A673 (cell line): ENCODE measurements at regions of chr11 and their contacts with region 1.

Region 1: GRCh38 chr11:68127714-68128681 is 6.8 kb upstream of the CHKA start:
- DNase-seq: peak; percentile 38
- H3K4me3 ChIP-seq: peak overlapping the region; percentile 30
- H3K27ac ChIP-seq: no peak overlapping the region
- H3K4me1 ChIP-seq: no peaks in the 10 kb centered on the region
- H3K27me3 ChIP-seq: no peaks in the 10 kb centered on the region
- CTCF ChIP-seq: no peak

Region 2: DNA sequence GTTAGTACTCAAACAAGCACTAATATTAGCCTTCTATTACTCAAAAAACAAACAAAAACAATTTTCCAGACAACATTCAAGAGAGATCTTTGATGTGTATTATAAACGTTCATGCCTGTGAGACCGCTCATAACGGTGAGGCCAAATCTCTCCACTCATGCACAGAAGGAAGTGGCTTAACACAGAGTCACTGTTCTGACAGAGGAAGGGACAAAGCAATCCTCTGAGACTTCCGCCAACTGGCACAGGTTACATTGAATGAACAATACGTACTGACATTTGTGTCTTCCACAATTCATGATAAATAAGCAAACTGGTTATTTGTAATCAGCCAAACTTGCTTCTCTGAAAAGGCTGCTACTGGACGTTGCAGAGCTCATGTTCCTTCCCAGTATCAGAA is 37.3 kb before region 1 on chr11:
- CTCF ChIA-PET with region 1: no interaction called
- POLR2A ChIA-PET with region 1: interaction called, 18 read pairs
- intact Hi-C with region 1: no loop called
- DNase-seq: no peak
- H3K4me3 ChIP-seq: no peak overlapping the region
- H3K27ac ChIP-seq: no peak overlapping the region
- H3K4me1 ChIP-seq: no peaks in the 10 kb centered on the region
- H3K27me3 ChIP-seq: no peaks in the 10 kb centered on the region
- CTCF ChIP-seq: no peak